ENCODE measurements at regions of chr2 and their contacts with region 1.

Region 1: GRCh38 chr2:96542357-96542977 is 5.9 kb downstream of the ARID5A start:
- DNase-seq: peak in 1 of 35 experiments; percentile 11
- ATAC-seq: no peak
- H3K4me3 ChIP-seq: no peak overlapping the region
- H3K4me3 Mint-ChIP-seq: peak overlapping the region in 2 of 3 donors; percentile 7 to 9
- H3K27ac ChIP-seq: no peak overlapping the region
- H3K27ac Mint-ChIP-seq: peak overlapping the region in 1 of 2 donors; percentile 60
- H3K4me1 ChIP-seq: peaks cover 34 to 91% of the 10 kb centered on the region in 2 experiments
- H3K4me1 Mint-ChIP-seq: peaks cover 84 to 88% (median 86%) of the 10 kb centered on the region in 3 donors
- H3K27me3 ChIP-seq: no peaks in the 10 kb centered on the region
- H3K27me3 Mint-ChIP-seq: no peaks in the 10 kb centered on the region

Region 2: GRCh38 chr2:96260404-96261260 is 281.8 kb before region 1 on chr2:
- CTCF ChIA-PET with region 1: no interaction called
- POLR2A ChIA-PET with region 1: no interaction called
- DNase-seq: peak in 21 of 35 experiments; percentile 6 to 41 (median 21)
- ATAC-seq: peak in 2 of 4 experiments; percentile 13 to 41
- H3K4me3 ChIP-seq: no peak overlapping the region
- H3K4me3 Mint-ChIP-seq: peak overlapping the region in 1 of 3 donors; percentile 34
- H3K27ac ChIP-seq: no peak overlapping the region
- H3K27ac Mint-ChIP-seq: peak overlapping the region; percentile 72 to 76
- H3K4me1 ChIP-seq: peaks cover 20 to 74% of the 10 kb centered on the region in 2 experiments
- H3K4me1 Mint-ChIP-seq: peaks cover 72 to 84% (median 83%) of the 10 kb centered on the region in 3 donors
- H3K27me3 ChIP-seq: no peaks in the 10 kb centered on the region
- H3K27me3 Mint-ChIP-seq: no peaks in the 10 kb centered on the region

Region 3: DNA sequence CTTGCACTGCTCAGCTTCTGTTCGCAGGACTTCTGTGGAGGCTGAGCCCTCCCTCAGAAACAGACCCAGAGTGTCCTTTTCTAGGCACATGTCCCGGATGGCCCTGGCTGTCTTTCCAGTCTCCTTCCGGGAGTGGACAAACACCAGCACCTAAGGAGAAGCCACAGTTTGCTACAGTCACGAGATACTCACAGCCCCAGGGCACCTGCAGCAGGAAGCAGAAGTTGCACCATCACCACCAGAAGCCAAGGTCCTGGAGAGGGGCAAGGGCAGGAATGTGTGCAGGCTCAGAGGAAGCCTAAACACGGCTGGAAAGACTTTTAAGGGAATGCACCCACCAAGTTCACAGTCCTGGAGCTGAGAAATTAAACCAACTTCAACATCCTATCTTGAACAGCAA is 250.7 kb before region 1 on chr2:
- CTCF ChIA-PET with region 1: no interaction called
- POLR2A ChIA-PET with region 1: interaction called in 1 of 2 experiments, 10 read pairs
- DNase-seq: no peak
- ATAC-seq: no peak
- H3K4me3 ChIP-seq: no peak overlapping the region
- H3K4me3 Mint-ChIP-seq: no peak overlapping the region
- H3K27ac ChIP-seq: no peak overlapping the region
- H3K27ac Mint-ChIP-seq: no peak overlapping the region
- H3K4me1 ChIP-seq: no peaks in the 10 kb centered on the region
- H3K4me1 Mint-ChIP-seq: no peaks in the 10 kb centered on the region
- H3K27me3 ChIP-seq: no peaks in the 10 kb centered on the region
- H3K27me3 Mint-ChIP-seq: no peaks in the 10 kb centered on the region